ENCODE measurements at regions of chr3 and their contacts with region 1.

Region 1: DNA sequence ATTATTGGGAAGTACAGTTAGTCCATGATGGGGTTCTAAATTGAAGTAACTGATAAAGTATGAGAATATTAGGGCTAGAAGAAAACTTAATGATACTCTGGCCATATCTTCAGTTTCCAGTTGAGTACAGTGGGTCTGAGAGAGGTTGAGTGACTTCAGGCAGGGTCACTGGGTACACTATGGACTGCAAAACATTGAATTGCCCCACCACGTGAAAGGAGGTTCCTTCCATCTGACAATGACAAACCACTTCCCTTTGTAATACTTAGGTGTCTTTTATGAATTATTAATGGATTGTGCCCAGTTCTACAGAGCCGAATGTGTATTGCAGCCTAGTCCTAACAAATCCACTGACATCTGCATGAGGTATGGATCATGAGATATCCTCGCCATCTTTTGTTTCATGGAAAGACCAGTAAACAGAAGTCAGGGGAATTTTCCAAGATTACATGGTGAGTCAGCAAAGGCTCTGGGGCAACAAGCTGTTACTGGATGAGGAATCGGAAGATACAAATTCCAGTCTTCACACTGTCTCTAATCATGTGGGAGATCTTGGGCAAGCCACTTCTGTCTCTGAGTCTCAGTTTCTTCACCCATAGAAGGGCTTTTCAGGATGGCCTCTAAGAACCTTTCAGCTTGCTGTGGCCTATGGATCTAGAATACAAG is 66.5 kb upstream of the BCL6 start:
- DNase-seq: no peak
- H3K4me3 ChIP-seq: no peak overlapping the region
- H3K27ac ChIP-seq: no peak overlapping the region
- H3K4me1 ChIP-seq: peaks cover 59% of the 10 kb centered on the region
- H3K27me3 ChIP-seq: no peaks in the 10 kb centered on the region
- CTCF ChIP-seq: no peak

Region 2: GRCh38 chr3:187130346-187131066 is 681.2 kb before region 1 on chr3:
- CTCF ChIA-PET with region 1: no interaction called
- POLR2A ChIA-PET with region 1: interaction called, 11 read pairs
- intact Hi-C with region 1: no loop called
- DNase-seq: no peak
- H3K4me3 ChIP-seq: no peak overlapping the region
- H3K27ac ChIP-seq: no peak overlapping the region
- H3K4me1 ChIP-seq: peaks cover 6% of the 10 kb centered on the region
- H3K27me3 ChIP-seq: no peaks in the 10 kb centered on the region
- CTCF ChIP-seq: no peak

Measured in PC-9 (cell line).